ENCODE measurements at regions of chr7 and their contacts with region 1.

Region 1: GRCh38 chr7:37284805-37285231 is 163.8 kb downstream of the ELMO1 start:
- DNase-seq: peak; percentile 64
- H3K4me3 ChIP-seq: no peak overlapping the region
- H3K27ac ChIP-seq: no peak overlapping the region
- H3K4me1 ChIP-seq: peaks cover 2% of the 10 kb centered on the region
- H3K27me3 ChIP-seq: no peaks in the 10 kb centered on the region
- CTCF ChIP-seq: peak; percentile 76

Region 2: DNA sequence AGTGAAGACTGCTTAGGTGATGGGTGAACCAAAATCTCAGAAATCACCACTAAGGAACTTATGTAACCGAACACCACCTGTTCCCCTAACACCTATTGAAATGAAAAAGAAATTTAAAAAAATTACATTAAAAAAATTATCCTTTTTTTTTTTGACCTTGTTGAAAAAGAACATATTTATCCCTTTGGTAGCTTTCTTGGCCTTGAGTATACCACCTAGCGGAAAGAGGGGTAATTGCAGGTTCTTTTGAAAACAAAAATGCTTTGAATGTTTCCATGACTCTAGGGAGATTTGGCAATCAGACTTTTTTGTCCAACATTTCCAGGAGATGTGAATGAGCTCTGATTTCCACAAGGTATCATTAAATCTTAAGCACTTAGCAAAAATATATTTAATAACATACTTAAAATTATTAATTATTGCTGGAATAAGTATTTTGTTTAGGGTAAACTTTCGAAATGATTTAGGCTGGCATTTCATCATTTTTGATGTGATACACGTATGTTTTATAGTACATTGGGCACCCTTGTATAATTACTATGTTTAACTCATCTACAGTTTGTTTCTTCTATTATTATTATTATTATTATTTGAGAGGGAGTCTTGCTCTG is 210.9 kb after region 1 on chr7:
- intact Hi-C with region 1: loop called (anchors 10 kb)
- DNase-seq: no peak
- H3K4me3 ChIP-seq: no peak overlapping the region
- H3K27ac ChIP-seq: no peak overlapping the region
- H3K4me1 ChIP-seq: no peaks in the 10 kb centered on the region
- H3K27me3 ChIP-seq: no peaks in the 10 kb centered on the region
- CTCF ChIP-seq: peak; percentile 67